Heart left ventricle (tissue), 16 donors: ENCODE measurements at regions of chr16 and their contacts with region 1.

Region 1: GRCh38 chr16:3431779-3432219 is 11.5 kb downstream of the ZNF597 start:
- DNase-seq: peak; percentile 32 to 79 (median 66)
- ATAC-seq: peak; percentile 76 to 94 (median 84)
- H3K4me3 ChIP-seq: peak overlapping the region in 9 of 12 donors; percentile 15 to 45 (median 32)
- H3K27ac ChIP-seq: peak overlapping the region in 1 of 12 donors; percentile 9
- H3K4me1 ChIP-seq: peaks cover 0 to 5% (median 0%) of the 10 kb centered on the region in 12 donors
- H3K27me3 ChIP-seq: no peaks in the 10 kb centered on the region
- CTCF ChIP-seq: no peak
- POLR2A ChIP-seq: no peak

Region 2: GRCh38 chr16:3234543-3235541 is 197.0 kb before region 1 on chr16 and contains the start of gene ZNF200:
- intact Hi-C with region 1: no loop called
- DNase-seq: peak; percentile 97 to 99 (median 98)
- ATAC-seq: peak; percentile 99
- H3K4me3 ChIP-seq: peak within 1 kb of the TSS; percentile 79 to 99 (median 90)
- H3K27ac ChIP-seq: peak within 1 kb of the TSS; percentile 88 to 100 (median 98)
- H3K4me1 ChIP-seq: peaks cover 0 to 18% (median 13%) of the 10 kb centered on the region in 12 donors
- H3K27me3 ChIP-seq: no peaks in the 10 kb centered on the region
- CTCF ChIP-seq: no peak
- POLR2A ChIP-seq: peak in 1 of 2 donors; percentile 75
- total RNA-seq, gene ZNF200: 4.8 to 8.7 (median 6.5) TPM

Region 3: DNA sequence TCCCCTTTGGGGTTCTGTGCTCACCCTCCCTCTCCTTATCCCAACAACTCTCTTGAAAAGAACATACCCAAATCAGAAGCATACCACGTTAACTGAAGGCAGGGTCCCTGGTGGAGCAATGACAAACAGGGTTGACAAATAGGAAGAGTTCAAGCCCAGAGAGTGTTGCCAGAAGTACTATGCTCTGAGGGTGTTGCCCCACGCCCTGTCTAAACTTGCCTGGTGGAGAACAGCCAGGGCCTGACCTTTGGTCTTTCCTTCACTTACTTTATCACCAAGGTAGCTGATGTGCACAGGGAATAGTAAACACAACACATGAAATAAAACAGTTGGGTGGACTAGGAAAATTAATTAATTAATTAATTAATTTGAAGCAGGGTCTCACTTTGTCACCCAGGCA is 103.2 kb before region 1 on chr16:
- intact Hi-C with region 1: loop called in 1 of 10 experiments (anchors 5 kb)
- DNase-seq: no peak
- ATAC-seq: no peak
- H3K4me3 ChIP-seq: no peak overlapping the region
- H3K27ac ChIP-seq: no peak overlapping the region
- H3K4me1 ChIP-seq: no peaks in the 10 kb centered on the region
- H3K27me3 ChIP-seq: no peaks in the 10 kb centered on the region
- CTCF ChIP-seq: no peak
- POLR2A ChIP-seq: no peak

Region 4: GRCh38 chr16:3358884-3359283 is 72.9 kb before region 1 on chr16:
- intact Hi-C with region 1: loop called in 1 of 10 experiments (anchors 5 kb)
- DNase-seq: no peak
- ATAC-seq: no peak
- H3K4me3 ChIP-seq: no peak overlapping the region
- H3K27ac ChIP-seq: no peak overlapping the region
- H3K4me1 ChIP-seq: no peaks in the 10 kb centered on the region
- H3K27me3 ChIP-seq: peaks cover 0 to 13% (median 0%) of the 10 kb centered on the region in 9 donors
- CTCF ChIP-seq: no peak
- POLR2A ChIP-seq: no peak

Region 5: GRCh38 chr16:3377917-3378316 is 53.9 kb before region 1 on chr16:
- intact Hi-C with region 1: loop called in 1 of 10 experiments (anchors 10 kb)
- DNase-seq: no peak
- ATAC-seq: no peak
- H3K4me3 ChIP-seq: no peak overlapping the region
- H3K27ac ChIP-seq: no peak overlapping the region
- H3K4me1 ChIP-seq: no peaks in the 10 kb centered on the region
- H3K27me3 ChIP-seq: no peaks in the 10 kb centered on the region
- CTCF ChIP-seq: no peak
- POLR2A ChIP-seq: no peak